GM10248 (cell line): ENCODE measurements at regions of chr1 and their contacts with region 1.

Region 1: DNA sequence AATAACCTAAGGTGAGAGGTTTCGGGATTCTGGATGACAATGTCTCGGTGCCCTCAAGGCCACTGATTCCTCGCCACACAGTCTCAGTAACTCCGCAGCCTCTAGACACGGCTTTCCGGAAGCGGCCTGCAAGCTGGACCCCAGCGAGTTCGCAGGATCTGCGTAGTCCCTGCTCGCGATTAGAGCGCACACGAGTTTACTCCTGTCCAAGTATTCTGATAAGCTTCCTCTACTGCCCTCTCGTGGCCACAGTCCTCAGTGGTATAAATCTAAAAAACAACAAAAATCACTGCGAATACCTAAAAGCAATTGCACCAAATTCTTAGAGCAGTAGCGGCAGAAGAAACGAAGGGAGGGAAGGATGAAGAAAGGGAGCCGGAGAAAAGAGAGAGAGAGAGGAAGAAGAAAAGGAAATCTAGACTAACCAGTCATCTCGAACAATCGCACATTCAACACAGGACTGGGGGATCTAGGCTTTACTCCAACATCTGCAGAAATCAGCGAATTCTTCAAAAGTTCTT is 1.1 kb upstream of the PLXNA2 start:
- DNase-seq: peak; percentile 77
- CTCF ChIP-seq: peak; percentile 78

Region 2: DNA sequence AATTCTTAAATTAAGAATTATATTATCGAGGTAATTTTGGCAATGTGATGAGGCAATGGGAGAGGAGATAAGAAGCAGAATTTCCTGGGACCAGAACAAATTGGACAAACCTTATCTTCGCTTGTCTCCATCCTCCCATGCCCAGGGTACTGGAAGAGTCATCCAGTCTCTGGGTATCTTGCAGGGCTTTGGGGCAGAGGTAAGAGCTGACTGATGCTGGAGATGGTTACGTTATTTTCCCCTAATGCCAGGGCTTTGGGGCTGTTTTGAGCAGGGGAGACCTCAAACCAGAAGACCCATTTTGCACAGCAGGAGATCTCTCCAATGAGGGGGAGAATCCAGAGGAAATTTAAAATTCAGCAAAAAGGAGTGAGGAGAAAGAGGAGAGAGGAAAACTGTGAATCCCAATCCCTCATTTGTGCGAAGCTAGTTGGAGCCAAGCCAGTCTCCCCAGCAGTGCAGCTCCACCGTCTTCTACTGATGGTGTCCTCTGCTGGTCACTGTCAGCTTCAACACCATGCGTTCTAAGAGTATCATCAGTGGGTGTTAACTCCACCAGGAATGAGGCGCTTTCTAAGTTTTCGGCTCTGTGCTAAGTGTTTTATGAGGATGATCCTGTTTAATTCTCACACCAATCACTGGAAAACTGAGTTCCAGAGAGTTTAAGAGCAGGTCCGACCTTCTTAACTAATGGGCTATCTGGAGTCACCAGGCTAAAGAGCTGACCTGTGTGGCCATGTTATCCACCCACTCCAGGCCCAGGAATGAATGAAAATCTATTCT is 247.6 kb before region 1 on chr1:
- CTCF ChIA-PET with region 1: interaction called, 13 read pairs
- POLR2A ChIA-PET with region 1: no interaction called
- DNase-seq: peak; percentile 62
- CTCF ChIP-seq: peak; percentile 89

Region 3: DNA sequence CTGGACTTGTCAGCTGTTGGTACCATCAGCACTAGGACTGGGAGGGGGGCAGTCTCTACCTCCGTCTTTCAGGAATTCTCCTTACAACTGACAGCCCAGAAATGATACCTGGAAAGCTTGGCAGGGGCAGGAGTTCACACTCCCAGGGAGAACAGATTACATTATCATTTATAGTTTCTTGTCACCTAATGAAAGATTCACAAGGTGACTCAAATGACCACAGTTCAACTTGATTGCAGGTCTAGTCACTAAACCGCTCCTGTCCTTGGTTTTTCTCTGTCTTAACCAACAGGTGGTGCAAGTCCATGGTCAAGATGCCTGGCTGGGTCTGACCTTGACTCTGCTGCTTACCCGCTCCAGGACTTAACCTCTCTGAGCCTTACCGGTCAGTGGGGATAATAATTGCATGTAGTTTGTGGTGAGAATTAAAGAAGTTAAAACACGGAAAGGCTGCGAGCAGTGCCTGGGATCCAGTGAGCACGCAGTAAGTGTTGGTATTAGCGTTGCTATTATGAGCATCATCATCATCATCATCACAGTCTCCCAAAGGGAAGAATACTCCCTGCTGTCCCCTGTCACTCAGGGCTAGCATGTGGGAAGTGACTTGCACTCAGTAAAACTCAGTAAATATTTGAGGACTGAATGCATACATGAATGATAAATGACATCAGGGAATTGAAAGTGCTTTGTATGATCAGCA is 209.0 kb before region 1 on chr1:
- CTCF ChIA-PET with region 1: interaction called, 14 read pairs
- POLR2A ChIA-PET with region 1: no interaction called
- DNase-seq: no peak
- CTCF ChIP-seq: no peak

Region 4: DNA sequence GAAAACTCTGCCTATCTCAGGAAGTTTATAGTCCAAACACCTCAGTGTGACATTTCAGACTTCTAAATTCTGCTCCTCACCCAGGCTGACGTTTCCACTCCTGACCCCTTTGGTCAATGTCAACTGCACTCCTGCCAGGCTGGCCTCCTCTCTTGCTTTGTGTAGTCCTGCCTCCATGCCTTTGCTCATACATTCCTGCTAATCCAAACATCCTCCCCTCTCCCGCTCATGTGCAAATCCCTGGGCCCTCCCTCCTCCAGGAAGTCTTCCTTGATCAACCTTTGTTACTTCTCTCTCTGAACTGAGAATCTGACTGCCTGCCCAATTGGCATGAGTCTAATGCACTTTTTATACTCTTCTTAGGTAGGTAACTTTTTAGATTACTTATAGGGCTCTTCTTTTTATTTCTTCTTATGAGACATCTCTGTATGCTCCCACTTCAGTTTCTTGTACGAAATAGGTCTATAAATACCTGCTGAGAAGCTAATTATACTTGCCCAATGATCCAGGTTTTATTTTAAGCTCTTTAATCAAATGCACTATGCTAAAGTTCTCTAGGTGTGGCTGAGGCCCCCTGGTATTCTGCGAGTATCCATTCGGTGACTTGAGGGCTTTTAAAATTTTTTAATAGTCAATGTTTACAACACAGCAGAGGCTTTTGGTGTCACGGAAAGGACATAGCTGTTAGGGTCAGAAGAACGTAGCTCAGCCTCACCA is 129.2 kb before region 1 on chr1:
- CTCF ChIA-PET with region 1: interaction called, 20 read pairs
- POLR2A ChIA-PET with region 1: no interaction called
- DNase-seq: no peak
- CTCF ChIP-seq: no peak

Region 5: GRCh38 chr1:208233546-208233945 is 11.7 kb before region 1 on chr1:
- CTCF ChIA-PET with region 1: interaction called, 58 read pairs
- POLR2A ChIA-PET with region 1: no interaction called
- DNase-seq: no peak
- CTCF ChIP-seq: no peak